Activated naive CD4-positive, alpha-beta T cell treated with anti-CD3 and anti-CD28 coated beads for 36 hours (primary cell): ENCODE measurements at regions of chr3 and their contacts with region 1.

Region 1: DNA sequence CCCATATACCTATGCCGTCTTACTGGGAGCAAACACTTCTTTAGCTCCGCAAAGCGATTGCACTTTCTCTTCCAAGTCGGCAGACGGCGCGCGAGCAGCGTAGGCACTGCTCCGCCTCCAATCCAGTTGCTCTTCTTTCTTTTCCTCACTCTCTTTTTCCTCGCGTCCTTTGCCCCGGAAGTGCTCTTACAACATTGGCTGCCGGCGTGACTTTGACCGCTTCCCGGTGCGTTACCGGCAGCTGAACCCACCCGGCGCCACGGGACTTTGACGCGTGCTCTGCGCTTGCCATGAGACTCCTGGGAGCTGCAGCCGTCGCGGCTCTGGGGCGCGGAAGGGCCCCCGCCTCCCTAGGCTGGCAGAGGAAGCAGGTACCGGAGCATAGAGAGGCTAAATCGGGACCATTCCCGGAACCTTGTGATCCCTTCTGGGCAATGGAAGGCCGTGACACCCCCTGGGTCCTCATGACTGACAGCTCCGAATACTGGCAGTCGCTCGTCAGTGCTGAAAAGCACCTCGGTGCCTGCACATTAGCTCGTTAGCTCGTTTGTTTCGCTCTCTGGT is at the start of gene GFM1:
- DNase-seq: peak; percentile 93
- H3K4me3 Mint-ChIP-seq: peak within 1 kb of the TSS; percentile 97
- H3K27ac Mint-ChIP-seq: peak within 1 kb of the TSS; percentile 87
- H3K4me1 Mint-ChIP-seq: peaks cover 36% of the 10 kb centered on the region
- H3K27me3 Mint-ChIP-seq: no peaks in the 10 kb centered on the region
- total RNA-seq, gene GFM1: 57.4 to 57.8 TPM

Region 2: GRCh38 chr3:157618075-157618760 is 1026.2 kb before region 1 on chr3:
- CTCF ChIA-PET with region 1: no interaction called
- intact Hi-C with region 1: loop called (anchors 2 kb)
- DNase-seq: peak; percentile 26
- H3K4me3 Mint-ChIP-seq: no peak overlapping the region
- H3K27ac Mint-ChIP-seq: no peak overlapping the region
- H3K4me1 Mint-ChIP-seq: peaks cover 5% of the 10 kb centered on the region
- H3K27me3 Mint-ChIP-seq: peaks cover 13% of the 10 kb centered on the region

Region 3: DNA sequence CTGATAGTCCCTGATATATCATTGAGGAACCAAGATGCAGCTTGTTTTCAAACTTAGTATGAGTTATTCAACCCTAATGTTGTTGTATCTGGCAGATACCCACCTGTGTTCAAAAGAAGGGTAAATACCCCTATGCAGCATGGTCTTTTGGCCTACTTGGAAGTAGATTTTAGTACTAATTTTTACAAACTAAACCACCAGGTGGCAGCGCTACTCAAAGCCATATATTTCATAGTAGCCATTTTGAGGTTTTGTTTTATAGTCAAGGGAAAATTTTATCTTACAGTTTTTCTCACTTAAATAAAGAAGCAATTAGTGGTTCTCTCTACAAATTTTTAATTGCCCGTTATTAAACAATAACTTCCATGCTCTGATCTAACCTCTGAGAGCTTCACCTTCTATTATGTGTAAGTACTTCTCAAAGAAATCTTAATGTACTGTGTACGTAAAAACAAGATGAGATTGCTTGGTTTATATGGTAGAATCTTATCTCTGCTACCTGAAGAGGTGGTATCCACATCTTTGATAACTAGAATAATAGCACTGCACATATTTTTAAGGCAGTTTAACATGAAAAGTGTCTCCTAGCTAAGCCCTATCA is 104.9 kb before region 1 on chr3:
- CTCF ChIA-PET with region 1: interaction called, 12 read pairs
- intact Hi-C with region 1: loop called (anchors 1 kb)
- DNase-seq: peak; percentile 63
- H3K4me3 Mint-ChIP-seq: no peak overlapping the region
- H3K27ac Mint-ChIP-seq: no peak overlapping the region
- H3K4me1 Mint-ChIP-seq: no peaks in the 10 kb centered on the region
- H3K27me3 Mint-ChIP-seq: no peaks in the 10 kb centered on the region

Region 4: DNA sequence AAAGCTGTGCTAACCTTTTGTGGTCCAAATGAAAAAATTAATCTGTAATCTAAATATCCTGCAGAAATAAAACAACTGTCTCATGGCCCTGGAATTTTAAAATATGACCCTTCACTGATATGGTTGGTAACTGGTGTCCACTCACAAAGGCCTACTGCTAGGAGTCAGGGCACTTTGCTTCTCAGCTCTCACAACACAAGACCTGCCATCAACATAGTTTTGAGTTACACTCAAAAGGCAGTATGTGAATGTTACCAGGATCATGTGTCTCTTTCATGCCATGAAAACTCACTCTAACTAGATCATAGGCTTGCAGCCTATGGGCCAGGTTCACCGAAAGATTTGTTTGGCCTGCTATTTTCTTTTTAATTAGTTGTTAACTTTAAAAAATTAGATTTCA is 83.4 kb before region 1 on chr3:
- CTCF ChIA-PET with region 1: no interaction called
- intact Hi-C with region 1: no loop called
- DNase-seq: no peak
- H3K4me3 Mint-ChIP-seq: no peak overlapping the region
- H3K27ac Mint-ChIP-seq: no peak overlapping the region
- H3K4me1 Mint-ChIP-seq: no peaks in the 10 kb centered on the region
- H3K27me3 Mint-ChIP-seq: peaks cover 11% of the 10 kb centered on the region

Region 5: GRCh38 chr3:158659454-158660237 is 15.2 kb after region 1 on chr3:
- CTCF ChIA-PET with region 1: interaction called, 43 read pairs
- intact Hi-C with region 1: no loop called
- DNase-seq: peak; percentile 74
- H3K4me3 Mint-ChIP-seq: no peak overlapping the region
- H3K27ac Mint-ChIP-seq: no peak overlapping the region
- H3K4me1 Mint-ChIP-seq: peaks cover 6% of the 10 kb centered on the region
- H3K27me3 Mint-ChIP-seq: no peaks in the 10 kb centered on the region

Region 6: DNA sequence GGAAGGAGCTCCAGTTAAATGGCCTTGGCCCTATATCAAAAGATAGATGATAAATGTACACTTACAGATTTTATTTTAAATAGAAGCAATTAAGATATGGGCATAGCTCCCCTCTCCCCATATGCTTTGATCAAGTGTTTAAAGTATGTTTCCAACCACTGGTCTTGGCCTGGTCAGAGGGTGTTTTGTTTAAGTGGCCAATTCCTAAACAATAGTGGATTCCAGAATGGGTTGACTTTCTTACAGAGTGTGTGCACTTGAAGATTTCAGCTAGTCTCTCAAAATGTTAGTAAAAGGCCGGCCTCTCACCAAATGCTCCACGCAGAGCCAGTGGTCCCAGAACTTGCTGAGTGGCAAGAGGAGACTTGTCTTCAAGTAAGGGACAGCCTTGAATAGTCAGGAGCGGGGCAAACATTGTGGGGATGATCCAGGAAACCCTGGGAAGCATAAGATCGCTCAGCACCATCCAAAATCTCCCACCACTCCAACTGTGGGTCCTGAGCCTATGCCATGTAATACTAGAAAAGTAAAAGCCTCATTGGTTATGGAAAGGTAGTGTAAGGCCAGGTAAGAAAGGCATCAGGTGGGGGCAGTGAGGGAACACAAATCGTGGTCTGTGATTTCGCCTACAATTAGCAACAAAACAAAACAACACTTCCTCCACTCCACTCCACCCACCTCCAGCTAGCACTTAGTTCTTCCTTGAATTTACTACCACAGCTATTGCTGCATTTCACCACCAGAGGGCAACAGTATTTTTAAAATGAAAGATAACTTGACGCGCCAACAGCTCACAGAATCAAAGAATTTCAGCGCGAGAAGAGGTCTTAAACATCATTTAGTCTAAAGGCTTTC is 83.0 kb after region 1 on chr3:
- CTCF ChIA-PET with region 1: interaction called, 4 read pairs
- intact Hi-C with region 1: loop called (anchors 2 kb)
- DNase-seq: peak; percentile 66
- H3K4me3 Mint-ChIP-seq: peak overlapping the region; percentile 19
- H3K27ac Mint-ChIP-seq: no peak overlapping the region
- H3K4me1 Mint-ChIP-seq: peaks cover 23% of the 10 kb centered on the region
- H3K27me3 Mint-ChIP-seq: peaks cover 2% of the 10 kb centered on the region

Region 7: GRCh38 chr3:158801696-158802408 is 157.4 kb after region 1 on chr3 and contains the start of gene MFSD1:
- CTCF ChIA-PET with region 1: interaction called, 15 read pairs
- intact Hi-C with region 1: no loop called
- DNase-seq: peak; percentile 92
- H3K4me3 Mint-ChIP-seq: peak within 1 kb of the TSS; percentile 84
- H3K27ac Mint-ChIP-seq: peak within 1 kb of the TSS; percentile 44
- H3K4me1 Mint-ChIP-seq: peaks cover 21% of the 10 kb centered on the region
- H3K27me3 Mint-ChIP-seq: no peaks in the 10 kb centered on the region
- total RNA-seq, gene MFSD1: 4.8 to 5.7 TPM

Region 8: DNA sequence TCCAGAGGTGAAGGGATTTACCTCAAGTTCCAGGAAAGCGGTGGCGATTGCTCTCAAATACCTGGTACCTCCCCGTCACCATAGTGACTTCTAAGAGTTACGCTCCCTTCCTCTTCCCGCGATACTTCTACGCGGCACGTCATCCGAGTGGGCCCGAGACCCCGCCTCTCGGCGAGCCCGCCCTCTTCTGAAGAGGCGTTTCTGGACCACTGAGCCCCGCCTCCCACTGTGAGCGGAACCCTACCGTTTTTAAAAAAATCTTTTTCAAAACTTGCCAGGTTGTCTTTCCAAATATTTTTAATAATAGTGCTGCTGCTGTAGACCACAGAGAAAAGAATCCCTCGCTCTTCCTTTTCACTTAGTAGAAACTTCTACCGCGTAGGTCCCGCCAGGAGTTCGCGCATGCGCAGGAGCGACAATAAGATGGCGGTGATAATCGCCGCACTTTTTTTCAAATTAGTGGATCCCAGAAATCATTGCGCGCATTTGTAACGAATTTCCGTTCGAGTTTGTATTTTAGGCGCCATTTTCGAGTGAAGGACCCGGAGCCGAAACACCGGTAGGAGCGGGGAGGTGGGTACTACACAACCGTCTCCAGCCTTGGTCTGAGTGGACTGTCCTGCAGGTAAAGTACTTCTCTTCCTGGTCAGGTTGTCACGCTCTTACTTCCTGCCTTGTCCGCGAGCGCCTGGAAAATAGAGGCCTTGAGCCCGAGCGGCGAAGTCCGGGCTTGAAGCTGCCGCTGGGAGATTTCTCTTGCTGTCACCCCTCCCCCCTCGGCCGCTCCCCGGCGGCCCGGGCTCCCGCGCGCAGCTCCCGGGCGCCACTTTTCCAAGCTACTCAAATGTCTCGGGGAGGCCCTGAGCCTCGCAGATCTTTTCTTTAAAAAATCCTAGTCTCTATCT is 1755.0 kb after region 1 on chr3 and contains the starts of genes IFT80 and SMC4:
- CTCF ChIA-PET with region 1: no interaction called
- intact Hi-C with region 1: loop called (anchors 10 kb)
- DNase-seq: peak; percentile 98
- H3K4me3 Mint-ChIP-seq: peak within 1 kb of the TSS; percentile 91
- H3K27ac Mint-ChIP-seq: peak within 1 kb of the TSS; percentile 97
- H3K4me1 Mint-ChIP-seq: peaks cover 39% of the 10 kb centered on the region
- H3K27me3 Mint-ChIP-seq: peaks cover 7% of the 10 kb centered on the region
- total RNA-seq, gene IFT80: 9.3 to 9.9 TPM
- total RNA-seq, gene SMC4: 187 to 191 TPM